Activated CD4-positive, alpha-beta memory T cell treated with anti-CD3 and anti-CD28 coated beads, Interleukin-2, amount 10 ng/mL, durations not matched to agents 7 days and 5 days (primary cell): ENCODE measurements at regions of chr10 and their contacts with region 1.

Region 1: GRCh38 chr10:80647173-80647811 is 109.6 kb downstream of the SH2D4B start:
- DNase-seq: no peak
- H3K4me3 Mint-ChIP-seq: no peak overlapping the region
- H3K27ac Mint-ChIP-seq: no peak overlapping the region
- H3K4me1 Mint-ChIP-seq: no peaks in the 10 kb centered on the region
- H3K27me3 Mint-ChIP-seq: peaks cover 10% of the 10 kb centered on the region

Region 2: GRCh38 chr10:80632742-80633141 is 14.6 kb before region 1 on chr10:
- CTCF ChIA-PET with region 1: no interaction called
- POLR2A ChIA-PET with region 1: no interaction called
- DNase-seq: no peak
- H3K4me3 Mint-ChIP-seq: no peak overlapping the region
- H3K27ac Mint-ChIP-seq: no peak overlapping the region
- H3K4me1 Mint-ChIP-seq: no peaks in the 10 kb centered on the region
- H3K27me3 Mint-ChIP-seq: no peaks in the 10 kb centered on the region

Region 3: GRCh38 chr10:80662577-80663261 is 15.4 kb after region 1 on chr10:
- CTCF ChIA-PET with region 1: interaction called, 13 read pairs
- POLR2A ChIA-PET with region 1: no interaction called
- DNase-seq: peak; percentile 67
- H3K4me3 Mint-ChIP-seq: no peak overlapping the region
- H3K27ac Mint-ChIP-seq: no peak overlapping the region
- H3K4me1 Mint-ChIP-seq: no peaks in the 10 kb centered on the region
- H3K27me3 Mint-ChIP-seq: peaks cover 6% of the 10 kb centered on the region

Region 4: DNA sequence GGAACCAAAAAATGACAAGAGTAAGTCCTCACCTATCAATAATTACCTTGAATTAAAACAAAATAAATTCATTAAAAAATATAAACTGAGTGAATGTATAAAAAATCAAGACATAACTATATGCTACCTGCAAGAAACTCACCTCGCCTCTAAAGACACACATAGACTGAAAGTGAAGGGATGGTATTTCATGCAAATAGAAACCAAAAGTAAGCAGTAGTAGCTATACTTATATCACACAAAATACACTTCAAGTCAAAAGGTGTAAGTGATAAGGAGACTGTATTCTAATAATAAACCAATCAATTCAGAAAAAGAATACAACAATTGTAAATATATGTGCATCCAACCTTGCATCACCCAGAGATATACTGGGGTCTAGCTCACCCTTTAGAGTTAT is 223.0 kb after region 1 on chr10:
- CTCF ChIA-PET with region 1: no interaction called
- POLR2A ChIA-PET with region 1: no interaction called
- DNase-seq: no peak
- H3K4me3 Mint-ChIP-seq: no peak overlapping the region
- H3K27ac Mint-ChIP-seq: no peak overlapping the region
- H3K4me1 Mint-ChIP-seq: no peaks in the 10 kb centered on the region
- H3K27me3 Mint-ChIP-seq: no peaks in the 10 kb centered on the region

Region 5: GRCh38 chr10:80964955-80965614 is 317.8 kb after region 1 on chr10:
- CTCF ChIA-PET with region 1: no interaction called
- POLR2A ChIA-PET with region 1: no interaction called
- DNase-seq: no peak
- H3K4me3 Mint-ChIP-seq: no peak overlapping the region
- H3K27ac Mint-ChIP-seq: no peak overlapping the region
- H3K4me1 Mint-ChIP-seq: no peaks in the 10 kb centered on the region
- H3K27me3 Mint-ChIP-seq: no peaks in the 10 kb centered on the region